ENCODE measurements at regions of chr17 and their contacts with region 1.

Region 1: GRCh38 chr17:37570527-37571093 is 38.6 kb downstream of the SYNRG start:
- DNase-seq: peak; percentile 79
- H3K4me3 ChIP-seq: peak overlapping the region in 1 of 2 experiments; percentile 6; a peak in 1 of 4 replicates
- H3K27ac ChIP-seq: peak overlapping the region in 1 of 2 experiments; percentile 36; a peak in 1 of 4 replicates
- H3K4me1 ChIP-seq: no peaks in the 10 kb centered on the region
- H3K27me3 ChIP-seq: no peaks in the 10 kb centered on the region
- CTCF ChIP-seq: peak; percentile 71
- EP300 ChIP-seq: no peak
- RAD21 ChIP-seq: peak; percentile 77

Region 2: DNA sequence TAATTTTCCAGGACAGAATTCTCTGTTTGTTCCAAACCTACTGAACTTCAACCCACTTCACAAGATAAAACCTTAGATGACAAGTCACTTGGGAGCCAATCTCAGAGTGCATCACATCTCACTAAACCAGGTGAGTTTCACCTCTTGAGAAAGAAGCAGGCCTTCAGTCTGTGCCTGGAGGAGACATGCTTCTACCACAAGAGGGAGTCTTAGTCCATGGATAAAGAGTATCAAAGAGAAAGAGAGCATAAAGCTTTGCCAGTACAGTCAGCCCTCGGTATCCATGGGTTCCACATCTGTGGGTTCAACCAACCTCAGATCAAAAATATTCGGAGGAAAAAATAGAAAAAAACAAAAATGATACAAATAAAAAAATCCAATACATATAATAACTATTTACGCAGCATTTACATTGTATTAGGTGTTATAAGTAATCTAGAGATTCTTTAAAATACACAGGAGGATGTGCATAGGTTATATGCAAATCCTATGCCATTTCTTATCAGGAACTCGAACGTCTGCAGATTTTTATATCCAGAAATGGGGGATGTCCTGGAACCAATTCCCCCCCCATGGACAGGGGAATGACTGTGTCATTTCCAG is 43.3 kb before region 1 on chr17:
- CTCF ChIA-PET with region 1: interaction called, 44 read pairs
- POLR2A ChIA-PET with region 1: no interaction called
- DNase-seq: peak; percentile 53
- H3K4me3 ChIP-seq: peak overlapping the region in 1 of 2 experiments; percentile 28; a peak in 1 of 4 replicates
- H3K27ac ChIP-seq: no peak overlapping the region
- H3K4me1 ChIP-seq: no peaks in the 10 kb centered on the region
- H3K27me3 ChIP-seq: no peaks in the 10 kb centered on the region
- CTCF ChIP-seq: peak; percentile 78
- EP300 ChIP-seq: no peak
- RAD21 ChIP-seq: peak; percentile 79

Region 3: DNA sequence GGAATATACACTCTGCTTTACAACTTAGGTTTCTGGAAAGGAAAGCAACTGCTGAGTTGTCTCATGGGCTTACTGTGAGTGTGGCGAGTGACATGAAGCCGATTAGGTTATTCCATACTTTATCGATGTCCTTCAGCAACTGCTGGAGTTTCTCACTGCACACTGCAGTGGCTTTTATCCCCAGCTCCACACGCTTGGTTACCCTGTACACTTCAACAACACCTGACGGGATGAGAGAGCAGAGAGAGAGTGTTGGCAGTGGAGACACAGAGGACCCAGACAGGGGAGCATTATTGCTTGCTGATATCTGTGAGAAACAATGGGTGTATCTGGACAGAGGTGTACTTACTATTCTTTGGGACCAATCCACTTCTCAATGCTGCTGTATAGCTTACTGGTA is 34.7 kb before region 1 on chr17:
- CTCF ChIA-PET with region 1: interaction called, 22 read pairs
- POLR2A ChIA-PET with region 1: no interaction called
- DNase-seq: no peak
- H3K4me3 ChIP-seq: no peak overlapping the region
- H3K27ac ChIP-seq: no peak overlapping the region
- H3K4me1 ChIP-seq: no peaks in the 10 kb centered on the region
- H3K27me3 ChIP-seq: no peaks in the 10 kb centered on the region
- CTCF ChIP-seq: no peak
- EP300 ChIP-seq: no peak
- RAD21 ChIP-seq: no peak

Region 4: GRCh38 chr17:37553401-37553966 is 17.1 kb before region 1 on chr17:
- CTCF ChIA-PET with region 1: interaction called, 18 read pairs
- POLR2A ChIA-PET with region 1: no interaction called
- DNase-seq: no peak
- H3K4me3 ChIP-seq: no peak overlapping the region
- H3K27ac ChIP-seq: no peak overlapping the region
- H3K4me1 ChIP-seq: no peaks in the 10 kb centered on the region
- H3K27me3 ChIP-seq: no peaks in the 10 kb centered on the region
- CTCF ChIP-seq: no peak
- EP300 ChIP-seq: no peak
- RAD21 ChIP-seq: no peak

Region 5: DNA sequence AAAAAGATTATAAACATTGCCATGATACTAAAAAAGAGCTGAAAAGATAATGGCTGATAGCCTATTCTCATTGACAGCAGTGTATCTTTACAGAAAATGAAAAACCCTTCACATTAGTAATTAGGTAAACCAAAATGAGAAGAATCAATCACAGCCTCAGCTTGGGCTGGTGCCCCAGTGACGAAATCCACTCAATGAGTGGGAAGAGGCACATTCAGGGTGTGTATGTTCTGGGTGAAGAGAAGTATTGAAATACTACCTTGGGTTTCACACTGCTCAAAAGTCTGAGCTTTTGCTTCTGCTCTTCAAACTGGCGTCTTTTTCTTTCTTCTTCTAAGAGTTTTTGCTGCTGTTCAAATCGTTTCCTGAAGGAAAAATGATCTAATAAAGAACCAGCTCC is 14.5 kb after region 1 on chr17:
- CTCF ChIA-PET with region 1: interaction called, 15 read pairs
- POLR2A ChIA-PET with region 1: no interaction called
- DNase-seq: no peak
- H3K4me3 ChIP-seq: no peak overlapping the region
- H3K27ac ChIP-seq: no peak overlapping the region
- H3K4me1 ChIP-seq: no peaks in the 10 kb centered on the region
- H3K27me3 ChIP-seq: no peaks in the 10 kb centered on the region
- CTCF ChIP-seq: no peak
- EP300 ChIP-seq: no peak
- RAD21 ChIP-seq: no peak